Activated CD8-positive, alpha-beta T cell treated with anti-CD3 and anti-CD28 coated beads for 36 hours (primary cell): ENCODE measurements at regions of chr12 and their contacts with region 1.

Region 1: DNA sequence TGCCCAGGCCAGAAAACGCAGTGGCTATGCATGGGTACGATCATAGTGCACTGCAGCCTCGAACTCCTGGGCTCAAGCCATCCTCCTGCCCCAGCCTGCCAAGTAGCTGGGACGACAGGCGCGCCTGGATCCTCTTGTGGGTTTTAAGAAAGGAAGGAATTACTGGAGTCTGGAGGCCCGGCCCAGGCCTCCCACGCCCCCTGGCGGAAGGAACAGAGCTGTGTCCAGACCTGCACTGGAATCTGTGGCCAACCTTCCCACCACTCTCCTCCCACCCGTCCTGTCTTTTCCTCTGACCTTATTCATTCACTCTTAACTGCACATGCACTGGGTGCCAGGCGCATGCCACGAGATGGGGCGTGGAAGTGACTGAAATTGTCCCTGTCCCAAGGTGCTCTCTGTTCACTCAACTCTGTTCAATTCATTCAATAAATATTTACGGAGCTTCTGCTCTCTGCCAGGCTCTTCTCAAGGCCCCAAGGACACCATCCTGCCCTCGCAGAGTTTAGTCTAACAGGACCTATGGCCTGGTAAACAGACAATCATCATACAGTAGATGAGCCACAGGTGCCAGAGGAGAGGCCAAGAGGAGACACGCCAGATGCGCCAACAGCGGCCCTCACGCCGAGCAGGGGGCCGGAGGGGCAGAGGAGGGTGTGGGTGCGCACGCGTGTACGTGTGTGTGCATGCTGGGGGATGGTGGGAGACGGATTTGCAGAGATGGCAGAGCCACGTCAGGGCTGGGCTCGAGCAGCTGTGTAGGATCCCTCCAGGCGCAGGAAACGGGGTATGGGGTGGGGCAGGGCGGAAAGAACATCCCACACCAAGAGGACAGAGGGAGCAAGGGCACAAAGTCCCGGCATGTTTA is 13.7 kb upstream of the TMEM106C start:
- DNase-seq: peak; percentile 65
- ATAC-seq: peak; percentile 72
- H3K4me3 Mint-ChIP-seq: no peak overlapping the region
- H3K27ac Mint-ChIP-seq: no peak overlapping the region
- H3K4me1 Mint-ChIP-seq: no peaks in the 10 kb centered on the region
- H3K27me3 Mint-ChIP-seq: peaks cover 5% of the 10 kb centered on the region
- CTCF ChIP-seq: peak; percentile 88

Region 2: DNA sequence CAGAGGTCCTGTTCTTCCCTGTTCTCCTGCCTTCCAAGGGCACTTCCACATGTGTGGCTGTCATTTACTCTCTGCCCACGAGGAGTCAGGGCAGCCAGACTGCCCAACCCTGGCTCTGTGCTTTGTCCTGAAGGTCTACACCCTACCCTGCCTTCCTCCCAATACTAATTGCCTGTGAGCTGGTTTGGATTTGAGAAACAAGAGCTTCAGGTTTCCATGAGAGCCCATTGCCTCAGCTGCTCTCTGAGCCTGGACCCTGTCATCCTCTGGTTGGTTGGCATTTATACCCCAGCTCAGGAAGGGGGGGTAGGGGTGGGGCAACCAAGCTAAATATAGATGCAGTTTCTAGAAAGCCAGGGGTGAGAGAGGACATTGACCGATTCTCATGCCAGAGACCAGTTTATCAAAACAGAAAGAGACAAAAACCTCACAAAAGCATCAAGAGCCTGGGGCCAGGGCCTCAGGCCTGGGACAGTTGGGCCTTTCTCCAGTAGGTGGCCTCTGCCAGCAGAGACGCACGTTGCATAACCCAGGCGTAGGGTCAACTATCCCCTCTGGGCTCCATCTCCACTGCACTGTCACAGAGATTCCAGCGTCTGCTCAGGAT is 79.4 kb before region 1 on chr12:
- CTCF ChIA-PET with region 1: interaction called, 7 read pairs
- POLR2A ChIA-PET with region 1: no interaction called
- intact Hi-C with region 1: loop called (anchors 10 kb)
- DNase-seq: no peak
- ATAC-seq: no peak
- H3K4me3 Mint-ChIP-seq: no peak overlapping the region
- H3K27ac Mint-ChIP-seq: peak overlapping the region; percentile 59
- H3K4me1 Mint-ChIP-seq: peaks cover 48% of the 10 kb centered on the region
- H3K27me3 Mint-ChIP-seq: no peaks in the 10 kb centered on the region
- CTCF ChIP-seq: peak; percentile 49

Region 3: DNA sequence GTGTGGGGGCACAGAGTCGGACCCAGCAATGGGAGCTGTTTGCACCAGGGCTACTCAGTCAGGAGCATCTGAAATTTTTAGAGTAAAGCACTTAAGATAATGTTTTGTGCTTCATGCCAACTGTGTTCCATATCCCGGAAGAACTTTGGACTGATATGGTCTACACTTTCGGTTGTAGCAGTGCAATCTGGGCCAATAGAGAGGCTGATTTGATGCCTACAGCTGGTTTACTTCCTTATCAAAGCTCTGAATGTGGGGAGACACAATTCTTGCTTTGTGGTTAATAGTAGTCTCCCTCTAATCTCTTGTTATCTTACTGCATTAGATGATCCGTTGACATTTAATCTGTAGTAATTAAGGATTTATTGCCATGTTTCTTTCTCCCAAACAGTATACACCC is 37.1 kb before region 1 on chr12:
- CTCF ChIA-PET with region 1: interaction called, 13 read pairs
- POLR2A ChIA-PET with region 1: interaction called, 3 read pairs
- intact Hi-C with region 1: no loop called
- DNase-seq: no peak
- ATAC-seq: no peak
- H3K4me3 Mint-ChIP-seq: no peak overlapping the region
- H3K27ac Mint-ChIP-seq: no peak overlapping the region
- H3K4me1 Mint-ChIP-seq: no peaks in the 10 kb centered on the region
- H3K27me3 Mint-ChIP-seq: peaks cover 19% of the 10 kb centered on the region
- CTCF ChIP-seq: no peak

Region 4: GRCh38 chr12:47935184-47935583 is 14.5 kb before region 1 on chr12:
- CTCF ChIA-PET with region 1: interaction called, 19 read pairs
- POLR2A ChIA-PET with region 1: no interaction called
- intact Hi-C with region 1: no loop called
- DNase-seq: no peak
- ATAC-seq: no peak
- H3K4me3 Mint-ChIP-seq: no peak overlapping the region
- H3K27ac Mint-ChIP-seq: no peak overlapping the region
- H3K4me1 Mint-ChIP-seq: no peaks in the 10 kb centered on the region
- H3K27me3 Mint-ChIP-seq: peaks cover 2% of the 10 kb centered on the region
- CTCF ChIP-seq: no peak

Region 5: GRCh38 chr12:47963340-47964040 is 13.8 kb after region 1 on chr12 and contains the start of gene TMEM106C:
- CTCF ChIA-PET with region 1: interaction called, 20 read pairs
- POLR2A ChIA-PET with region 1: no interaction called
- intact Hi-C with region 1: no loop called
- DNase-seq: peak; percentile 94
- ATAC-seq: peak; percentile 98
- H3K4me3 Mint-ChIP-seq: peak within 1 kb of the TSS; percentile 99
- H3K27ac Mint-ChIP-seq: peak within 1 kb of the TSS; percentile 86
- H3K4me1 Mint-ChIP-seq: peaks cover 28% of the 10 kb centered on the region
- H3K27me3 Mint-ChIP-seq: peaks cover 1% of the 10 kb centered on the region
- CTCF ChIP-seq: peak; percentile 92
- total RNA-seq, gene TMEM106C: 148 to 158 TPM